SK-N-SH (cell line): ENCODE measurements at regions of chr6 and their contacts with region 1.

Region 1: DNA sequence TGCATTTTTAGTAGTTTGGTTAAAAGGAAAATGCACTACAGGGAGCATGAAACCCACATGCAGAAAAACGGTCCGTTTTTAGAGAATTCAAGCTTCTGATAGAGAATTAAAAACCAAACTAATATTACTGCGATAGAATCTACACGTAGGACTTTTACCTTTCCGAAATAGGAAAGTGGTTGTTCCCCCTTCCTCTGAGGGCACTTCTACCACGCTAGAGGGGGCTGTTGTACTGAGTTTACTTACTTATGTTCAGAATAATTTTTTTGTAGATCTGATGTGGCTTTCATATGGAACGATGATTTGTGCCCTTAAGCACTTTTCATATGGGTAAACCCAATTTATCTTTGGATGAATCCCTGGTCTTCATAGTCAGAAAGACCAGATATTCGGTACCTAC is 264.3 kb upstream of the PLN start:
- DNase-seq: peak; percentile 48
- H3K4me3 ChIP-seq: no peak overlapping the region
- H3K27ac ChIP-seq: no peak overlapping the region
- H3K4me1 ChIP-seq: no peaks in the 10 kb centered on the region; a peak in 2 of 4 replicates
- H3K27me3 ChIP-seq: no peaks in the 10 kb centered on the region; the same call in 1 of the 2 replicates
- CTCF ChIP-seq: peak; percentile 90
- EP300 ChIP-seq: no peak
- RAD21 ChIP-seq: peak; percentile 88

Region 2: DNA sequence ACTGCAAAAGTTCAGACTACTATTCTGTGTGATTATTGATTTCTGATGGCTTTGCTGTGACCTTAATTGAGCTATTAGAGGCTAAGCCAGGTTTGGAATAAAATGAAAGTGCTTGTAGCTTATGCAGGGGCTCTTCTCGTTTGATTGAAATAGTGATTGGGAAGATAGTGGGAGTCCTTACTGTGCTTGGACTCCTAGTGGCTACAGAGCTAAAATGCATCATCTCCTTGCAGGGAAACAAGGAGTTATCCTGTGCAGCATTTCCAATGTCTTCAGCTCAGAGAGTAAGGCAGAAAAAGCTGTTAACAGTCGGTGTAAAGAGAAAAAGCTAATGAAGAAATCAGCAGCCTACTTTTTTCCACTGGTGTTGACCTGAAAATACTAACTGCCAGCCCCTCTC is 203.2 kb before region 1 on chr6:
- CTCF ChIA-PET with region 1: no interaction called
- POLR2A ChIA-PET with region 1: no interaction called
- DNase-seq: peak; percentile 1
- H3K4me3 ChIP-seq: no peak overlapping the region
- H3K27ac ChIP-seq: no peak overlapping the region
- H3K4me1 ChIP-seq: no peaks in the 10 kb centered on the region
- H3K27me3 ChIP-seq: no peaks in the 10 kb centered on the region
- CTCF ChIP-seq: peak; percentile 30; the same call in 1 of the 2 replicates
- EP300 ChIP-seq: no peak
- RAD21 ChIP-seq: no peak

Region 3: DNA sequence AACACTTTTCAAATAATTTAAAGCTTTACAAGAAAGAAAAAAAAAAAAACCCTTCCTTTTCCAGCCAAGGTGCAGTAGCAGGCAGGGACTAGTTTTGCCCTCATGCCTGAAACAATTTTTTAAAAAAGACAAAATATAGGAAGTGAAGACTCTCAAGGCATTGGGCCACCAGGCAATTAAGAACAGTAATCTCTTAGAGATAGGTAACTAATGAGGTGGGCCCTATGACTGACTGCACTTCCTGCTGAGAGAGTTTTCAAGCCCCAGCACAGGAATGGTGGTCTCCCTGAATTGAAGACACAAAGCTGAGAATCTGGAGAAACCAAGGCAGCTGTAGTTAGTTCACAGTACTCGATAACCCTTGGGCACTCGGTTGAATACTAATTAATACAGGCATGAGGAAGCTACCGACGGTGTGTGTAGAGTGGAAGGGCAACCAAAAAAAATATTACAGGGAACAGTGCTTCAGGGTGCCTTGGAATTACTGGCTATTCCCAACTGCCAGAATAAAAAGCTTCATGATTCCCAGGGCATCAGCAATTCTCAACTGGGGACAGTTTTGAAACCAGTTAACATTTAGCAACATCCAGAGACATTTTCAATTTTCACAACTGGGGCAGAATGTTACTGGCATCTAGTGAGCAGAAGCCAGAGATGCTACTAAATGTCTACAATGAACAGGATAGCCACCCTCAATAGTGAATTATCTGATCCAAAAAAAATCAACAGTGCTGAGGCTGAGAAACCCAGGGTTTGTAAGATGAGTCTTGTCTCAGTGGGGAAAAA is 228.4 kb after region 1 on chr6:
- CTCF ChIA-PET with region 1: interaction called, 29 read pairs
- POLR2A ChIA-PET with region 1: no interaction called
- DNase-seq: no peak
- H3K4me3 ChIP-seq: no peak overlapping the region
- H3K27ac ChIP-seq: no peak overlapping the region
- H3K4me1 ChIP-seq: no peaks in the 10 kb centered on the region
- H3K27me3 ChIP-seq: no peaks in the 10 kb centered on the region
- CTCF ChIP-seq: no peak
- EP300 ChIP-seq: no peak
- RAD21 ChIP-seq: no peak

Region 4: GRCh38 chr6:118542184-118542952 is 258.6 kb after region 1 on chr6:
- CTCF ChIA-PET with region 1: interaction called, 10 read pairs
- POLR2A ChIA-PET with region 1: no interaction called
- DNase-seq: no peak
- H3K4me3 ChIP-seq: no peak overlapping the region
- H3K27ac ChIP-seq: peak overlapping the region in 1 of 2 experiments; percentile 23; a peak in 1 of 4 replicates
- H3K4me1 ChIP-seq: no peaks in the 10 kb centered on the region; a peak in 1 of 4 replicates
- H3K27me3 ChIP-seq: no peaks in the 10 kb centered on the region
- CTCF ChIP-seq: no peak
- EP300 ChIP-seq: 0 out of 4 replicates have a peak, but pooled peaks of 1 of the 2 experiments have one; percentile 34
- RAD21 ChIP-seq: no peak

Region 5: DNA sequence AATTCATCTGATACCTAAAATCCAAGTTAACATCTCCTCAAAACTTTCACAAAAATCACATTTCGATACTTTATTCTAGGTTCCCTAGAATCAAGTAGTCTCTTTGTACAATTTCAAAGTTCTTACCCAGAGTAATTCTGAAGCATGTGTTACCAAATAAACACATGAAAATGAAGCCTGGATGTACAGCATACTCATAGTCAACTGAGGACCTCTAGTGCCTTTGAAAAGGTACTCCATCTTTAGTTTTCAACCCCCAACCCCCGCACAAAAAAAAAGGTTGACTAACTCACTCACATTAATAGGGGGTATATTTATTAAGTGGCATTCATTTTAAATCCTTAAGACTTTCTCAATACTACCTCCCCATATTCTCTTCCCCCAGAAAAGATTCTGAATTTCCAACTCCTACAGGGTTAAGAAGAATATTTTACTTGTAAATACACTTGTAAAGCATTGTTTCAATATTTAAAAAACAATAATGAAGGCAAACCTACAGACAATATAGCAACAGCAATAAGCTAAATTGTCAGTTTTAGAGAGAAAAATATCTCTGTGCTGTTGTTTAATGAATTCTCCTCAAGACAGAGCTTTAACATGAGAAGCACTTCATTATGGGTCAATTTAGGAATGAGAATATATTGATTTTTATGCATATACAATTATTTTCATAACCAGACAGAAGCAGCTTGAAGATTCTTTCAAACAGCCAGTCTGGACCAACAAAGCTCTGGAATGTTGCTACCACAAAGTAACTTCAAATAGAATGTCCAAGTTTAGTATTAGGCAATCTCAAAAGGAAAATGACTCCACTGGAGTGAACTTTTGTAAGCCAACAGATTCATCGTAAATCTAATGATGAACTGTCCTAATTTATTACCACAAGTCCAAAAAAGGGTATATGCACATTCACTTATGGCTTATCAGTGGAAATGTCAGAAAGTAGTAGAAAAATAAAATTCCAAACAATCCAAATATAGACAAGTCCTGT is 267.6 kb after region 1 on chr6:
- CTCF ChIA-PET with region 1: interaction called, 12 read pairs
- POLR2A ChIA-PET with region 1: no interaction called
- DNase-seq: peak; percentile 41
- H3K4me3 ChIP-seq: peak overlapping the region in 1 of 2 experiments; percentile 18; a peak in 1 of 4 replicates
- H3K27ac ChIP-seq: no peak overlapping the region
- H3K4me1 ChIP-seq: peaks cover 0 to 13% of the 10 kb centered on the region in 2 experiments; a peak in 2 of 4 replicates
- H3K27me3 ChIP-seq: no peaks in the 10 kb centered on the region
- CTCF ChIP-seq: peak; percentile 74
- EP300 ChIP-seq: no peak
- RAD21 ChIP-seq: peak; percentile 86

Region 6: GRCh38 chr6:118580585-118581419 is 297.0 kb after region 1 on chr6:
- CTCF ChIA-PET with region 1: interaction called, 38 read pairs
- POLR2A ChIA-PET with region 1: no interaction called
- DNase-seq: peak; percentile 49
- H3K4me3 ChIP-seq: peak overlapping the region in 1 of 2 experiments; percentile 38; a peak in 1 of 4 replicates
- H3K27ac ChIP-seq: no peak overlapping the region
- H3K4me1 ChIP-seq: no peaks in the 10 kb centered on the region
- H3K27me3 ChIP-seq: no peaks in the 10 kb centered on the region
- CTCF ChIP-seq: peak; percentile 63
- EP300 ChIP-seq: no peak
- RAD21 ChIP-seq: peak; percentile 80